MCF 10A (cell line): ENCODE measurements at regions of chr2 and their contacts with region 1.

Region 1: DNA sequence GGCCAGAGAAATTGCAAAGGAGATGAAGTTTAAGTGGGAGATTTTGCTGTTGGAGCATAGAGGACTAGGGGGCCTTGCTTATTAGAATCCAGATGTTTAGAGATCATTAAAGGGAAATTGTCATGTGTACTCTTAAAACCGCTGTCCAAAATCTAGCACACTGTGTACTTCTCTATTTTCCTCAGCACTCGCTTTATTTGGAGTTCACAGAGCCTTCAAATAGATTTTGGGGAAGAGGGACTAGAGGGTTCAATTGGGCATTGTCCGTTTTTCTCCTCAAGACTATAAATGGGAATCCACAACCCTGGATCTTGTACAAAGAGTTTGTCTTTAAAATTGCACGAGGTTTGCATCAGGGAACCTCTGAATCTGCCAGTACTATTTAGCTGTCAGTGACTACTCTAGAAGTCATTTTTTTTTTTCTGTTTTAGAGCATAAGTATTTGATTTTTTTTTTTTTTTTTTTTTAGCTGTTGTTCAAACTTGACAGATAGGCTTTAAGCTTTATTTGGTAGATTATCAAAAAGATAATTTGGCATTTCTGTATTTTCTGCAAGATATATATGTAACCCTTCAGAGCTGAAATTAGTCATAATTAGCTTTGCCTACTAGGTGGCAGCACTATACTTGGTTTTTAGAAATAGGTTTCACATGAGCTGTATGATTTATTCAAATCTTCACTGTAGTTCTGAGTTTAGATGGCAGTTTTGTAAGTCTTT is 14.2 kb downstream of the PMS1 start:
- DNase-seq: peak; percentile 40
- H3K4me3 Mint-ChIP-seq: no peak overlapping the region
- H3K27ac Mint-ChIP-seq: peak overlapping the region; percentile 16
- H3K4me1 Mint-ChIP-seq: peaks cover 31% of the 10 kb centered on the region
- H3K27me3 Mint-ChIP-seq: no peaks in the 10 kb centered on the region
- CTCF ChIP-seq: peak; percentile 59

Region 2: DNA sequence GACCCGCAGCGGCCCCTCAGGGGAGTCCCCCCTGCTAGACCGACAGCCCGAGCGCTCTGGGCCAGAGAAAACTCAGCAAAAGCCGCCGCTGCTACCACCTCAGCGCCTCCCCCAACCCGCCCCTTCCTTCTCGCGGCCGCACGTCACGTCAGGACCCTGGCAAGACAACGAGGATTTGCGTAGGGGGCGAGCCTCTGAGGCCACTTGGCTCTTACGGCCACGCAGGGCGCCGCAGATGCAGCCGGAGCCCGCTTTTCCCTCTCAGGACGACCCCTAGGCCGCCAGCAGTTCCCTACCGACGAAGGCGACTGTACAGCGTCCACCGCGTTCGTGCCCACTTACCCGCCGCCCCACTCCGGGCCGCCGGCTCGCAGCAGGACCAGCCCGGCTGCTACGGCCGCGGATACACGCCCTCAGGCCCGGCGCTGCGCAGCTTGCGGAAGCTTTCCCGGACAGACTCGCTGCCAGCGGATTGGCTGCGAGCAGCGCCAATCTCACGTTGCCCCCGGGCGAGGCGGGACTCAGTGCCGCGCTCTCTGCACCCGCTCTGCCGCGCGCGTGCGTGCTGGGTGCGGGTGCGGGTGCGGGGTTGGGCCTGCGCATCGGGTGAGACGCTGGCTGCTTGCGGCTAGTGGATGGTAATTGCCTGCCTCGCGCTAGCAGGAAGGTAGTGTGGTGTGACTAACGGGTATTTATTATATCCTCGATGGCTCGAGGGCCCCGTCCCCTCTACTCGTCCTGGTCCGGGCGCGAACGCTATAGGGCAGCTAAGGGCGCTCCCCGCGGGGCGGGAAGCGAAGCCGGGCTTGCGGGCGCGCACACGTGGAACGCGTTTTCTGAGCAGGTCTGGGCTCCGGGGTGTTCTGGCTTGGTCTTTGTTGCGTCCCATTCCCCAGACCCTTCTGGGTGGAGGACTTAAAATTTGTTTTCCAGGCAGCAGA is 14.3 kb before region 1 on chr2 and contains the starts of genes ORMDL1 and PMS1:
- CTCF ChIA-PET with region 1: interaction called, 14 read pairs
- POLR2A ChIA-PET with region 1: interaction called, 11 read pairs
- intact Hi-C with region 1: no loop called
- DNase-seq: peak; percentile 94
- H3K4me3 Mint-ChIP-seq: peak within 1 kb of the TSS; percentile 90
- H3K27ac Mint-ChIP-seq: peak within 1 kb of the TSS; percentile 73
- H3K4me1 Mint-ChIP-seq: peaks cover 41% of the 10 kb centered on the region
- H3K27me3 Mint-ChIP-seq: no peaks in the 10 kb centered on the region
- CTCF ChIP-seq: no peak
- total RNA-seq, gene ORMDL1: 83.0 and 85.1 TPM in 2 replicates
- total RNA-seq, gene PMS1: 38.3 and 50.9 TPM in 2 replicates

Region 3: GRCh38 chr2:189933911-189934399 is 135.5 kb after region 1 on chr2:
- CTCF ChIA-PET with region 1: no interaction called
- POLR2A ChIA-PET with region 1: no interaction called
- intact Hi-C with region 1: loop called (anchors 10 kb)
- DNase-seq: peak; percentile 30
- H3K4me3 Mint-ChIP-seq: no peak overlapping the region
- H3K27ac Mint-ChIP-seq: peak overlapping the region; percentile 80
- H3K4me1 Mint-ChIP-seq: peaks cover 11% of the 10 kb centered on the region
- H3K27me3 Mint-ChIP-seq: no peaks in the 10 kb centered on the region
- CTCF ChIP-seq: no peak

Region 4: GRCh38 chr2:190911813-190912212 is 1113.3 kb after region 1 on chr2:
- CTCF ChIA-PET with region 1: no interaction called
- POLR2A ChIA-PET with region 1: no interaction called
- intact Hi-C with region 1: no loop called
- DNase-seq: peak; percentile 23
- H3K4me3 Mint-ChIP-seq: no peak overlapping the region
- H3K27ac Mint-ChIP-seq: peak overlapping the region; percentile 33
- H3K4me1 Mint-ChIP-seq: peaks cover 12% of the 10 kb centered on the region
- H3K27me3 Mint-ChIP-seq: no peaks in the 10 kb centered on the region
- CTCF ChIP-seq: no peak